ENCODE measurements at regions of chr9 and their contacts with region 1.

Region 1: DNA sequence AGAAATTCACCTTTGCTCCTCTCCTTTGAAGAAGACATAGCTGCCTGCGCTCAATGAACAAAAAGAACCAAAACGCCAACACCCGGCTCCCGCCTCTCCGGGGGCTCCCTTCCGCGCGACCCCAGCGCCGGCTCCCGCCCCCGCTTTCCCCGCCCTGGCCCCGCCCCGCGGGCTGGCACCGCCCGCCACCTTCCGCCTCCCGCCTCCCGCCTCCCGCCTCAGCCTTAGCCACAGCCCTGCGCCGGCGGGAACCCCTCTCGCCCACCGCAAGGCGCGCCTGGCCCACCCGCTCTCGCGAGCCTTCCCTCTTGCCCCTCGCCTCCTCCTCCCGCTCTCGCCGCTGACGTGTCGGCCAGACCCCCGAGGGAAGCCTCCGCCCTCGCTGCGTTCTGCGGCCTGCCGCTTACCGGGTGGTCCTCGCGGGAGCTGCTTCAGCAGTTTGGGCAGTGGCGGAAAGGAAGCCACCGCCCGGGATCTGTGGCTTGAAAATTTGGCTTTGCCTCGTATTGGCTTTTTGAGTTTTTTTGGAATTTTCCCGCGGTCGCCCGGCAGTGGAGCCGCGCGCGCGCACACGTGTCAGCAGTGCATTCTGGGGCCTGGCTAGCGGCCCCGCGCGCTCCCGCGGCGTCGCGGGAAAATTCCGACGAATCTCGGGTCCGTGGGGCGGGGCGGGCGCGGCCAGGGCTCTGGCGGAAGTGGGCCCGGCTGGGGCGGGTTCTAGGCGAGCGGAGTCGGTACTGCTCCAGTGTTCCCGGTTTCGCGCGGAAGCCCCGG is at the start of gene FANCC:
- DNase-seq: peak; percentile 72 to 80
- ATAC-seq: peak; percentile 88
- H3K4me3 ChIP-seq: peak within 1 kb of the TSS; percentile 78 to 100 (median 97)
- H3K27ac ChIP-seq: peak within 1 kb of the TSS; percentile 91 to 98 (median 94)
- H3K4me1 ChIP-seq: peaks cover 8 to 15% of the 10 kb centered on the region in 2 donors
- H3K27me3 ChIP-seq: no peaks in the 10 kb centered on the region
- CTCF ChIP-seq: no peak
- POLR2A ChIP-seq: peak in 1 of 2 donors; percentile 23
- total RNA-seq, gene FANCC: 1.2 to 4.8 (median 2.5) TPM

Region 2: GRCh38 chr9:94178927-94179326 is 1138.4 kb before region 1 on chr9:
- in situ Hi-C with region 1: no loop called
- intact Hi-C with region 1: no loop called
- DNase-seq: no peak
- ATAC-seq: no peak
- H3K4me3 ChIP-seq: no peak overlapping the region
- H3K27ac ChIP-seq: peak overlapping the region in 2 of 4 donors; percentile 20 to 27
- H3K4me1 ChIP-seq: peaks cover 70 to 78% of the 10 kb centered on the region in 2 donors
- H3K27me3 ChIP-seq: no peaks in the 10 kb centered on the region
- CTCF ChIP-seq: no peak
- POLR2A ChIP-seq: no peak

Region 3: DNA sequence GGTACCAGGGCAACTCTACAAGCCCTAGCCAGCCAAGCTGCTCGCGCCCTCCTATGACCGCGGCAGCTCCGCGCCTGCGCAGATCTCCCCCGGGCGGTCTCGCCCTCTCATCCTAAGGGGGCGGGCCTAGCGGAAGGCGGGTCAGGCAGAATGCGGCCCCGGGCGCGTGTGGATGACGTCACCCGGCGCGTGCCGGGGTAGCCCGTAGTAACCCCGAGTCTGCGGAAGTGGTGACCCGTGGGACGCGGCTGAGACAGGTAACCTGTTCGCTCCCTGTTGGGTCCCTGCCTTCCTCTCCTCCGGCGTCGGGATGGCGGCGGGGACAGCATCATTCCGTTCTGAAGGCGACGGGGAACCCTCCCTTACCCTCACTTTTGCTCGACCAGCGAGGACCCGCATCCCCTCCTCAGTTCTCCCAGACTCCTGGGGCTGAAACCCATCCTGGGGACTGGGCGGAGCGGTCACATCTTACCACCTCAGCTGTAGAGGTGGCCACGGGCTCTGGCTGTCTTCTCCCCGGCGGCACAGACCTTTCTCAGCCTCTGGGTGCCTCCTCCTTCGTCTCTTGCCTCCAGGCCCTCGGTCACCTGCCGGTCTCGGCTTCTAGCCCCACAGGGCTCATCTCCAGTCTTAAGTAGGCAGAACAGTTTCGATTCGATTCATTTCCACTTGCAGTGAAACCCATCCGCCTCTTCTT is 590.7 kb before region 1 on chr9 and contains the start of gene AOPEP:
- in situ Hi-C with region 1: no loop called
- intact Hi-C with region 1: loop called (anchors 5 kb)
- DNase-seq: peak; percentile 95 to 98
- ATAC-seq: peak; percentile 99 to 100
- H3K4me3 ChIP-seq: peak within 1 kb of the TSS; percentile 78 to 98 (median 88)
- H3K27ac ChIP-seq: peak within 1 kb of the TSS; percentile 87 to 95 (median 93)
- H3K4me1 ChIP-seq: peaks cover 10 to 12% of the 10 kb centered on the region in 2 donors
- H3K27me3 ChIP-seq: no peaks in the 10 kb centered on the region
- CTCF ChIP-seq: peak in 1 of 5 experiments; percentile 22
- POLR2A ChIP-seq: peak; percentile 75 to 76
- total RNA-seq, gene AOPEP: 56.5 to 160 (median 103) TPM

Region 4: DNA sequence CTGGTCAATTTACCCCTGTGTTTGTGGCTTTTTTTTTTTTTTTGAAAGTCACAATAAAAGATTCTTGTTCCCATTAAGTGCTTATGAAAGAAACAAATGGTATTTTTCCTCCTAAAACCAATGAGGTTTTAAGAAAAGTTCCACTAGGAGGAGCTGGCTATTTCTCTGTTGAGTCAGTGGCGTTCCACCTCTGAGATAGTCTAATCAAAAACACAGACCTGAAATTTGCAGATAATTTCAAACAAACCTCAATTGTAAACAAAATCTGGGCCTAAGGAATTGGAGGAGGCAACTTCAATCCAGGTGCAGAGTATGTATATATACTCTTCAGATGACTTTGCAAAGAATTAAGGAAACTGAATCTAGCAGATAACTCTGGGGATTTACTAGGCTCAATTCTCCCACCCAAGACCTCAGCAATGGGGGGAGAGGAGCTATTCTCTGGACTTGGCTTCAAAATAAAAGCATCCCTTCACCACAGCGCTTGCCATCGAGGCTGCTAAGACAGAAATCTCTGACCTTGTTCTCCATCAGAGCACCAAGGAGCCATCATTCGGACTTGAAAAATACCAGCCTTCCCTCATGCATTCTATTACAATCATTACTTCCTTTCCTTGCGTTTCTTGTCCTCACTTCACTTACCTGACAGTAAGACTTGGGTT is 52.2 kb before region 1 on chr9:
- in situ Hi-C with region 1: no loop called
- intact Hi-C with region 1: no loop called
- DNase-seq: no peak
- ATAC-seq: no peak
- H3K4me3 ChIP-seq: no peak overlapping the region
- H3K27ac ChIP-seq: no peak overlapping the region
- H3K4me1 ChIP-seq: no peaks in the 10 kb centered on the region
- H3K27me3 ChIP-seq: no peaks in the 10 kb centered on the region
- CTCF ChIP-seq: no peak
- POLR2A ChIP-seq: no peak

Region 5: GRCh38 chr9:95363051-95363841 is 45.9 kb after region 1 on chr9:
- in situ Hi-C with region 1: no loop called
- intact Hi-C with region 1: no loop called
- DNase-seq: no peak
- ATAC-seq: no peak
- H3K4me3 ChIP-seq: peak overlapping the region in 2 of 4 donors; percentile 2 to 27
- H3K27ac ChIP-seq: no peak overlapping the region
- H3K4me1 ChIP-seq: peaks cover 5 to 6% of the 10 kb centered on the region in 2 donors
- H3K27me3 ChIP-seq: no peaks in the 10 kb centered on the region
- CTCF ChIP-seq: no peak
- POLR2A ChIP-seq: no peak

Region 6: GRCh38 chr9:95425910-95426551 is 108.7 kb after region 1 on chr9:
- in situ Hi-C with region 1: no loop called
- intact Hi-C with region 1: loop called (anchors 10 kb)
- DNase-seq: no peak
- ATAC-seq: peak; percentile 36 to 46
- H3K4me3 ChIP-seq: peak overlapping the region; percentile 46 to 74 (median 56)
- H3K27ac ChIP-seq: peak overlapping the region; percentile 73 to 87 (median 80)
- H3K4me1 ChIP-seq: peaks cover 0 to 7% of the 10 kb centered on the region in 2 donors
- H3K27me3 ChIP-seq: no peaks in the 10 kb centered on the region
- CTCF ChIP-seq: no peak
- POLR2A ChIP-seq: no peak

Region 7: DNA sequence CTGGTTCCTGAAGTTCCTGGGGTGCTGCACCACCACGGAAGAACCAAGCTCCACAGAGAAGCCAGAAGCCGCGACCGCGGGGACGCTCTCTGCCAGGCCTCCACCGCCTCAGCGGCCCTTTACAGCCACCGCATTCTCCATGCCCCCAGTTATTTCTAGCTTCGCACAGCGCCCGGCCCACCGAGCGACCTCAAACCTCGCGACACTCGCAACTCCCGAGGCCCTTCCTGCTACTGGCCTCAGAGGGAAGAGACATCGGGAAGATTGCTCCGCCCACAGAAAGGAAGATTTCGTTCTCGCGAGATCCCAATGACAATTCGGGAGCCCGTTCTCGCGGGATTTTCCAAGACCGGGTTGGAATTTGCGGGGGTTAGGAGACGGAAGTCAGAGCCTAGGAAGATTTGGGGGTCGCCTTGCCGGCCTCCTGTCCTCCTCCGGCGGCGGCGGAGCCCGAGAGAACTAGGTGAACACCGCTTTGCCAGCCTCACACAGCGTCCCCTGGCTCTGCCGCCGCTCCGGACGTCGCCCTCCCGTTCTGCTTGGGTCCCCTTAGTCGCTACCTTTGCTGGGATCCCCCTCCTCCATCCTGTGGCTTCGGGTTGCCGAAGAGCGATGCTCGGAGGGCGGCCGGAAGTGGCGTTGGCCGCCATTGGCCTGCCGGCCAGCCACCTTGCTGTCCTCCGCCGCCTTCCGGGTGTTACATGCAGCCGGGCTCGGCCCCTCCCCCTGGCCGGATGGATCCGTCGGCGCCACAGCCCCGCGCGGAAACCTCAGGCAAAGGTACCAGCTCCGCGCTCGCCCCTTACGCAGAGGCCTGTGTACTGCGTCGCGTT is 558.2 kb after region 1 on chr9 and contains the start of gene ERCC6L2:
- in situ Hi-C with region 1: no loop called
- intact Hi-C with region 1: loop called (anchors 5 kb)
- DNase-seq: peak; percentile 90 to 95
- ATAC-seq: peak; percentile 95 to 97
- H3K4me3 ChIP-seq: no peak within 1 kb of the TSS
- H3K27ac ChIP-seq: no peak within 1 kb of the TSS
- H3K4me1 ChIP-seq: peaks cover 11 to 19% of the 10 kb centered on the region in 2 donors
- H3K27me3 ChIP-seq: no peaks in the 10 kb centered on the region
- CTCF ChIP-seq: no peak
- POLR2A ChIP-seq: peak; percentile 50 to 69
- total RNA-seq, gene ERCC6L2: 24.2 to 46.2 (median 35.9) TPM

Measured in gastrocnemius medialis (tissue), 4 donors.